CD8-positive, alpha-beta T cell (primary cell): ENCODE measurements at regions of chr2 and their contacts with region 1.

Region 1: DNA sequence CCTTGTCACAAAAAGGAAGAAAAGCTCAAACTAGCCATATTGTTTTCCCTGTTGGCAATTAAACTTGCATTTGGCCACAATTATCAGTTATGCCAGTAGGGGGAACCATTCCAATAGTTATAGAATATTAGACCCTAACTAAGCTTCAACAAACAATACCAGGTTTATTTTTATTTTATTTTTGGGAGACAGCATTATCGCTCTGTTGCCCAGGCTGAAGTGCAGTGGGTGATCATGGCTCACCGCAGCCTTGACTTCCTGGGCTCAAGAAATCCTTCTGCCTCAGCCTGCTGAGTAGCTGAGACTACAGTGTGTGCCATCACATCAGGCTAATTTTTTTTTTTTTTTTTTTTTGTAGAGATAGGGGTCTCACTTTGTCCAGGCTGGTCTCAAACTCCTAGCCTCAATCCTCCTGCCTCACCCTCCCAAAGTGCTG is 102.1 kb downstream of the ATAD2B start:
- DNase-seq: peak in 3 of 9 experiments; percentile 42 to 68 (median 60)
- ATAC-seq: peak; percentile 69
- H3K4me3 ChIP-seq: no peak overlapping the region
- H3K4me3 Mint-ChIP-seq: no peak overlapping the region
- H3K27ac ChIP-seq: no peak overlapping the region
- H3K27ac Mint-ChIP-seq: no peak overlapping the region
- H3K4me1 ChIP-seq: no peaks in the 10 kb centered on the region
- H3K4me1 Mint-ChIP-seq: no peaks in the 10 kb centered on the region
- H3K27me3 ChIP-seq: no peaks in the 10 kb centered on the region
- H3K27me3 Mint-ChIP-seq: no peaks in the 10 kb centered on the region
- CTCF ChIP-seq: peak; percentile 78

Region 2: GRCh38 chr2:23249348-23249747 is 575.4 kb before region 1 on chr2:
- CTCF ChIA-PET with region 1: no interaction called
- POLR2A ChIA-PET with region 1: no interaction called
- intact Hi-C with region 1: no loop called
- DNase-seq: no peak
- ATAC-seq: no peak
- H3K4me3 ChIP-seq: no peak overlapping the region
- H3K4me3 Mint-ChIP-seq: no peak overlapping the region
- H3K27ac ChIP-seq: no peak overlapping the region
- H3K27ac Mint-ChIP-seq: no peak overlapping the region
- H3K4me1 ChIP-seq: no peaks in the 10 kb centered on the region
- H3K4me1 Mint-ChIP-seq: no peaks in the 10 kb centered on the region
- H3K27me3 ChIP-seq: peaks cover 0 to 5% of the 10 kb centered on the region in 2 experiments
- H3K27me3 Mint-ChIP-seq: peaks cover 22% of the 10 kb centered on the region
- CTCF ChIP-seq: no peak

Region 3: DNA sequence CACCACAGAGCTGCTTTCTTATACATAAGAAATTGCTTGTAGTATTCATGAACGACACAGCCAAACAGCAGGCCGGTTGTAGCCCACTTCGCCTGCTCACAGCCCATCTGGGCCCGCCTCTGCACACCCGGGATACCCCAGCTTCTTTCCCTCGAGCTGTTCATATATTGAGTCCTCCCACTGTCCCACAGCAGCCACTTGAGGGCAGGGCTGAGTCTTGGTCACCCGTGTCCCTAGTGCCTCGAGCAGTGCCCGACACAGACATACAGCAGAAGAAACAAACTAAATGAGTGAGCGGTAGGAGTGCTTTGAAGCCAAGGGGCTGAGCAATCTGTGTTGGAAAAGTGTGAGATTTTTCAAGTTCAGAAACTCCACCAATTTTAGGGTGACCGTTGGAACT is 188.4 kb before region 1 on chr2:
- CTCF ChIA-PET with region 1: no interaction called
- POLR2A ChIA-PET with region 1: no interaction called
- intact Hi-C with region 1: no loop called
- DNase-seq: no peak
- ATAC-seq: no peak
- H3K4me3 ChIP-seq: no peak overlapping the region
- H3K4me3 Mint-ChIP-seq: no peak overlapping the region
- H3K27ac ChIP-seq: no peak overlapping the region
- H3K27ac Mint-ChIP-seq: no peak overlapping the region
- H3K4me1 ChIP-seq: no peaks in the 10 kb centered on the region
- H3K4me1 Mint-ChIP-seq: no peaks in the 10 kb centered on the region
- H3K27me3 ChIP-seq: no peaks in the 10 kb centered on the region
- H3K27me3 Mint-ChIP-seq: no peaks in the 10 kb centered on the region
- CTCF ChIP-seq: no peak

Region 4: DNA sequence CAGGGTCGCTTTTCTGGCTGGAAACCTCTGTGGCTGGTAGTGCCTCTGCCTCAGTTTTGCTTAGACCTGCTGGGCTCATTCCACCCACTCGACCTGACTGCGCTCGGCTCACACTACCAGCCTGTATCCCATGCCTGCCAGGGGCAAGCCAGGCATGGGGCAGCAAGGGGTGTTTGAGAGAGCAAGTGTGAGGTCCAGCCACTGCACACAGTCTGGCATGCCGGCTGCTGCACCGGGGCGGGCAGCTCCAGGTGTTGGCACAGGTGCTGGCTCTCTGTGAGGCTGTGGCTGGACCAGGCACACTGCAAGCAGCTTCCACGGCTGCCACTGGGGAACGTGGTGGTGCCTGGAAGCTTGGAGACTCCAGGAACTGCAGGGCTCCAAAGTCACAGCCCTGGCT is 11.2 kb after region 1 on chr2:
- CTCF ChIA-PET with region 1: interaction called, 15 read pairs
- POLR2A ChIA-PET with region 1: interaction called, 3 read pairs
- intact Hi-C with region 1: no loop called
- DNase-seq: no peak
- ATAC-seq: no peak
- H3K4me3 ChIP-seq: no peak overlapping the region
- H3K4me3 Mint-ChIP-seq: no peak overlapping the region
- H3K27ac ChIP-seq: no peak overlapping the region
- H3K27ac Mint-ChIP-seq: no peak overlapping the region
- H3K4me1 ChIP-seq: no peaks in the 10 kb centered on the region
- H3K4me1 Mint-ChIP-seq: no peaks in the 10 kb centered on the region
- H3K27me3 ChIP-seq: no peaks in the 10 kb centered on the region
- H3K27me3 Mint-ChIP-seq: no peaks in the 10 kb centered on the region
- CTCF ChIP-seq: no peak

Region 5: GRCh38 chr2:24058564-24059271 is 233.9 kb after region 1 on chr2:
- CTCF ChIA-PET with region 1: no interaction called
- POLR2A ChIA-PET with region 1: no interaction called
- intact Hi-C with region 1: loop called in 1 of 2 experiments (anchors 1 kb)
- DNase-seq: no peak
- ATAC-seq: no peak
- H3K4me3 ChIP-seq: no peak overlapping the region
- H3K4me3 Mint-ChIP-seq: no peak overlapping the region
- H3K27ac ChIP-seq: no peak overlapping the region
- H3K27ac Mint-ChIP-seq: no peak overlapping the region
- H3K4me1 ChIP-seq: no peaks in the 10 kb centered on the region
- H3K4me1 Mint-ChIP-seq: no peaks in the 10 kb centered on the region
- H3K27me3 ChIP-seq: no peaks in the 10 kb centered on the region
- H3K27me3 Mint-ChIP-seq: no peaks in the 10 kb centered on the region
- CTCF ChIP-seq: no peak

Region 6: GRCh38 chr2:24084386-24085361 is 259.9 kb after region 1 on chr2 and contains the start of gene TP53I3:
- CTCF ChIA-PET with region 1: interaction called, 47 read pairs
- POLR2A ChIA-PET with region 1: interaction called, 5 read pairs
- intact Hi-C with region 1: loop called (anchors 1 kb)
- DNase-seq: peak; percentile 64 to 90 (median 80)
- ATAC-seq: peak; percentile 88
- H3K4me3 ChIP-seq: peak within 1 kb of the TSS; percentile 54 to 87
- H3K4me3 Mint-ChIP-seq: peak within 1 kb of the TSS; percentile 88
- H3K27ac ChIP-seq: peak within 1 kb of the TSS in 1 of 2 experiments; percentile 12
- H3K27ac Mint-ChIP-seq: peak within 1 kb of the TSS; percentile 79
- H3K4me1 ChIP-seq: peaks cover 13% of the 10 kb centered on the region
- H3K4me1 Mint-ChIP-seq: peaks cover 14% of the 10 kb centered on the region
- H3K27me3 ChIP-seq: no peaks in the 10 kb centered on the region
- H3K27me3 Mint-ChIP-seq: no peaks in the 10 kb centered on the region
- CTCF ChIP-seq: peak; percentile 82
- total RNA-seq, gene TP53I3: 0.17 TPM in 1 of 2 experiments, not detected in the other

Region 7: DNA sequence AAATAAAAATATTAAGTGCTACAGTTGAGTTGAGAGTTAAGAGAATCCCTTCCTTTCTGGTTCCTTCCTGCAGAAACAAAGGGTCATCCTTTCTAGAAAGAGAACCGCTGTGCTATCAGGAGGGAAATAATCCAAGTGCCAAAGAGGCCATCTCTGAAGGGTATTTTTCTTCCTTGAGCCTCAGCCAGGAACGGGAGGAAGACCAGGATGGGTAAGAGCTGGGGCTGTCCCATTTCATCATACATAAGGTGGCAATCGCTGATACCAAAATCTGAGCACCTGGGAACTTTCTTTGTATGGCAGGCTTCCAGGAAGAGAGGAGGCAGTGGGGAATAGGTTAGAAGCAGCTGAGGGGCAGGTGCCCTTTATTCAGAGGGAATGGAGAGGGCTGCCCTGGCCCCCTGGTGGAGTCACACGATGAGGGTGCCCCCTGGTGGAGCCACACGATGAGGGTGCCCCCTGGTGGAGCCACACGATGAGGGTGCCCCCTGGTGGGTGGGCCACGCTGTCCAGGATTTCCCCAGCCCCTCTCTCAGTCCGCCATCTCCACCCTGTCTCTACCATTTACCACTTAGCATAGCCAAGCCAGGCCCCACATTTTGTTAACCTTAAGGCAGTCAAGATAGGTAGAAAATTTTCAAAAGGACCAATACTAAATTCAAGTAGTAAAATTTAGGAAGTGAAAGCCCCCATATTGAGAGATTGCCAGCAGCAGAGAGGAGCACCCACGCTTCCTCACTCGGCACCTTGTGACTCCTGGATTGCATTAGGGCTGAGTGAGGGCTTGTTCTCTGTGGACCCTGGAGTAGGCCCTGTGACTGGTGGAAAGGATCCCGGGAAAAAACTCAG is 339.6 kb after region 1 on chr2:
- CTCF ChIA-PET with region 1: interaction called, 23 read pairs
- POLR2A ChIA-PET with region 1: no interaction called
- intact Hi-C with region 1: loop called (anchors 1 to 2 kb)
- DNase-seq: peak in 8 of 9 experiments; percentile 3 to 57 (median 44)
- ATAC-seq: peak; percentile 63
- H3K4me3 ChIP-seq: no peak overlapping the region
- H3K4me3 Mint-ChIP-seq: no peak overlapping the region
- H3K27ac ChIP-seq: no peak overlapping the region
- H3K27ac Mint-ChIP-seq: no peak overlapping the region
- H3K4me1 ChIP-seq: no peaks in the 10 kb centered on the region
- H3K4me1 Mint-ChIP-seq: no peaks in the 10 kb centered on the region
- H3K27me3 ChIP-seq: no peaks in the 10 kb centered on the region
- H3K27me3 Mint-ChIP-seq: no peaks in the 10 kb centered on the region
- CTCF ChIP-seq: peak; percentile 47

Region 8: DNA sequence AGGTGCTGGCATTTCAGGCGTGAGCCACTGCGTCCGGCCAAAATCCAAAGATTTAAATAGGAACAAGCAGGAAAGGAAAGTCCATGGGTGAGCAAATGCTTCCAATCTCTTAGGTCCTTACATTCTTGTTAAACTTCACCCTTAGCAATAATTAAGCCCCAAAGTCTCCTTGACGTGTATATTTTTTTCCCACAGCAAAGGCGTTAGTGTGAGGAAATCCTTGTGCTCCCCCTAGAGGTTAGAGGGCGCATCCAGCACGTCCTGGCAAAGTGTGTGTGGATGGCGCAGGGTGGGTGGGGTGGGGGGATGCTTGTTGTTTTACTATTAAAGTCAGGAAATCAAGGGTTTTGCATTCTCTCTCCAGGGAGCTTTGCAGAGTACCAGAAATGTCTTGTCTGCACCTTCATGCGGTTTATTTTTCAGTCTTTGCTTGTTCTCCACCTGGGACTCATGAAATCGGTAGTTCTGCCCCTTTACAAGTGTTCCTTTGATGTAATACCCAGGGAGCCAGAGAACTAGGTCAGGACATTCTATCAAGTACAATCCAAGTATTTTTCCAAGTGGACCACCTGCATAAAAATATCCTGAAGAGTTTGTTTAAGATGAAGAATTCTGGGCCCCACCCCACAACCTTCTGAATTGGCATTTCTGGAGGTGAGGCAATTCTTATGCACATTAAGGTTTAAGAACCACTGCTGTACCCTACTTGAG is 557.7 kb after region 1 on chr2:
- CTCF ChIA-PET with region 1: no interaction called
- POLR2A ChIA-PET with region 1: no interaction called
- intact Hi-C with region 1: loop called in 1 of 2 experiments (anchors 10 kb)
- DNase-seq: peak; percentile 23 to 82 (median 52)
- ATAC-seq: peak; percentile 73
- H3K4me3 ChIP-seq: no peak overlapping the region
- H3K4me3 Mint-ChIP-seq: no peak overlapping the region
- H3K27ac ChIP-seq: no peak overlapping the region
- H3K27ac Mint-ChIP-seq: no peak overlapping the region
- H3K4me1 ChIP-seq: no peaks in the 10 kb centered on the region
- H3K4me1 Mint-ChIP-seq: no peaks in the 10 kb centered on the region
- H3K27me3 ChIP-seq: no peaks in the 10 kb centered on the region
- H3K27me3 Mint-ChIP-seq: no peaks in the 10 kb centered on the region
- CTCF ChIP-seq: peak; percentile 57

Region 9: GRCh38 chr2:25135413-25135812 is 1310.6 kb after region 1 on chr2:
- CTCF ChIA-PET with region 1: no interaction called
- POLR2A ChIA-PET with region 1: no interaction called
- intact Hi-C with region 1: no loop called
- DNase-seq: no peak
- ATAC-seq: no peak
- H3K4me3 ChIP-seq: no peak overlapping the region
- H3K4me3 Mint-ChIP-seq: no peak overlapping the region
- H3K27ac ChIP-seq: no peak overlapping the region
- H3K27ac Mint-ChIP-seq: no peak overlapping the region
- H3K4me1 ChIP-seq: no peaks in the 10 kb centered on the region
- H3K4me1 Mint-ChIP-seq: peaks cover 7% of the 10 kb centered on the region
- H3K27me3 ChIP-seq: peaks cover 18 to 19% of the 10 kb centered on the region in 2 experiments
- H3K27me3 Mint-ChIP-seq: peaks cover 50% of the 10 kb centered on the region
- CTCF ChIP-seq: no peak